MCF 10A (cell line): ENCODE measurements at regions of chr10 and their contacts with region 1.

Region 1: GRCh38 chr10:116947842-116948529 is 57.0 kb downstream of the SHTN1 start:
- DNase-seq: peak; percentile 66
- H3K4me3 Mint-ChIP-seq: peak overlapping the region; percentile 33
- H3K27ac Mint-ChIP-seq: peak overlapping the region; percentile 79
- H3K4me1 Mint-ChIP-seq: peaks cover 15% of the 10 kb centered on the region
- H3K27me3 Mint-ChIP-seq: no peaks in the 10 kb centered on the region
- CTCF ChIP-seq: no peak

Region 2: DNA sequence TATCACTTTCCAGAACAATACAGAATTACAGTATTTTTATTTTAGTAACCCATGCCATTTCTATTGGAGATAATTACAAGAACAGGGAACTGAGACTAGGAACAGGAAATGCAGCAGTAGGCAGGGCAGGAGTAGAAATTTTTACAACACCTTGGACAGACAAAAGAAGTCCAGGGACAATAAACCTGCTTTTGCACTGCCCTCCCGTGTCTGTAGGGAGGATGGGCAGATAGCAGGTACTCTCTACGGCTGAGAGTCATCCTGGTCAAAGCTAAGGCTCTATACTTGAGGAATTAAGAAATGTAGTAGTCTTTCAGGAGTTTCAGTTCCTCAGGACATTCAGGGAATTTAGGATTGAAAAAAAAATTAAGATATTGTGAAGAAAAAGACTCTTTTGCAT is 126.6 kb after region 1 on chr10:
- CTCF ChIA-PET with region 1: no interaction called
- POLR2A ChIA-PET with region 1: no interaction called
- intact Hi-C with region 1: loop called (anchors 10 kb)
- DNase-seq: peak; percentile 52
- H3K4me3 Mint-ChIP-seq: no peak overlapping the region
- H3K27ac Mint-ChIP-seq: no peak overlapping the region
- H3K4me1 Mint-ChIP-seq: peaks cover 8% of the 10 kb centered on the region
- H3K27me3 Mint-ChIP-seq: no peaks in the 10 kb centered on the region
- CTCF ChIP-seq: peak; percentile 33